Activated B cell treated with CpG ODN at 0.5 μM for 24 hours (primary cell): ENCODE measurements at regions of chr12 and their contacts with region 1.

Region 1: DNA sequence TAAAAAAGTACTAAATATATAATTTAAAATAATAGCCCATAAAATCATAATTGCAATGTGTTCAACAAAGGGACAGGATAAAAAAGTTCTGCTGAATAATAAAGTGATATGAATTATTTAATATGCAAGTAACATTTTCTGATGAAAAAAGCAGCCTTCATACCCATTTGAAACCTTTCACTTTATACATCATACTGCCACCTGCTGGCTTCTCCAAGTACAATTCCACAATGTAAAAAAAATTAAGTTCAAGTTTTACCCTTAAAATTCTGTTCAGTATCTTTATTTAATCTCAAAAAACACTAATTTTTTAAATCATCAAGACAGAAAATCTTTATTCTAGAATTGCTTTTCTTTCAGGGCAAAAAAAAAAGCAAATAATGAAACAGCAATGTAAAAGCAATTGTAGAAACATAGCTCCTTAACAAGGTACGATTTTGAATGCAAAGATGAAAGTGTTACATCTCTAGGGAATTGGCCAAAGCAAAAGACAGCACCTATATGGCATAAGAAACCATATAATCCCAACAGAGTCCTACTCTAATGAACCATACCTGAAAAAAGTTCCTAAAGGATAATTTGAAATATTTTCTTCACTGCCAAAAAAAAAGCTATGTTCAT is 15.0 kb downstream of the MDM1 start:
- DNase-seq: no peak
- ATAC-seq: no peak
- H3K4me3 Mint-ChIP-seq: no peak overlapping the region
- H3K27ac Mint-ChIP-seq: no peak overlapping the region
- H3K4me1 Mint-ChIP-seq: no peaks in the 10 kb centered on the region
- H3K27me3 Mint-ChIP-seq: no peaks in the 10 kb centered on the region
- CTCF ChIP-seq: peak; percentile 83

Region 2: DNA sequence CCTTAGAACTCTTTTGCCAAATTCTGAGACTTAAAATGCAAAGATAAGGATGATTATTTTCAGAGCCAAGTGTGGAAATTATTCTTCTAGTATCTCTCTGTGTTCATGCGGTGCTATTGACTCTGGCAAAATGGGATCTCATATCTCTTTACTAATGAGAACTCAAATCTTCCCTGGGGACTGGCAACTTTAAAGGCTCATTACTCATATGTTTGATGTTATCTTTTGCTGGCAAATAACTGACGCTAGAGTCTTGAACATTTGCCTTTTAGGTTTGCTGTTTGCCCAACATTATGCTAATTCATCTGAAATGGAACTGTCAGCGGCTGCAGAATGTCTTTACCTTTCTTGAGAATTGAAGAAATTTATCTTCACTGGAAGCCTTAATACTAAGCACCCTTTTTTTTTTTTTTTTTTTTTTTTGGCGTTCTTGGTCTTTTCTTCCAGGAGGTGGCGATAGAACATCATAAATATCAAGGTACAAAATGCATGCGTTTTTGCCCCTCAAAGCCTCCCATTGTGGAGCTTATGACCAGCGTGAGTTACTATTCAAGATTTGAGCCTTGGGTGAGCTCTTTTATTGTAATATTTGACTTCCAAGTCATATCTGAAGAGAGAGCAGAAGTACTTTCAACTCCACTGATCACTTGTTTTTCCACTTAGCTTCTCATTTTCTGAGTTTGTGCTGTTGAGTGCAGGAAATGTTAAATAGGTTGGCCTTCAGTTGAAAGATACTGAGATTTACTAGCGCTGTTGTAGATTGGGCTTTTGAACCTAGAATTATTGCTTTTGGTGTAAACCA is 961.4 kb before region 1 on chr12:
- CTCF ChIA-PET with region 1: interaction called, 6 read pairs
- POLR2A ChIA-PET with region 1: no interaction called
- intact Hi-C with region 1: loop called (anchors 1 kb)
- DNase-seq: no peak
- ATAC-seq: peak; percentile 54
- H3K4me3 Mint-ChIP-seq: no peak overlapping the region
- H3K27ac Mint-ChIP-seq: no peak overlapping the region
- H3K4me1 Mint-ChIP-seq: peaks cover 5% of the 10 kb centered on the region
- H3K27me3 Mint-ChIP-seq: no peaks in the 10 kb centered on the region
- CTCF ChIP-seq: no peak

Region 3: DNA sequence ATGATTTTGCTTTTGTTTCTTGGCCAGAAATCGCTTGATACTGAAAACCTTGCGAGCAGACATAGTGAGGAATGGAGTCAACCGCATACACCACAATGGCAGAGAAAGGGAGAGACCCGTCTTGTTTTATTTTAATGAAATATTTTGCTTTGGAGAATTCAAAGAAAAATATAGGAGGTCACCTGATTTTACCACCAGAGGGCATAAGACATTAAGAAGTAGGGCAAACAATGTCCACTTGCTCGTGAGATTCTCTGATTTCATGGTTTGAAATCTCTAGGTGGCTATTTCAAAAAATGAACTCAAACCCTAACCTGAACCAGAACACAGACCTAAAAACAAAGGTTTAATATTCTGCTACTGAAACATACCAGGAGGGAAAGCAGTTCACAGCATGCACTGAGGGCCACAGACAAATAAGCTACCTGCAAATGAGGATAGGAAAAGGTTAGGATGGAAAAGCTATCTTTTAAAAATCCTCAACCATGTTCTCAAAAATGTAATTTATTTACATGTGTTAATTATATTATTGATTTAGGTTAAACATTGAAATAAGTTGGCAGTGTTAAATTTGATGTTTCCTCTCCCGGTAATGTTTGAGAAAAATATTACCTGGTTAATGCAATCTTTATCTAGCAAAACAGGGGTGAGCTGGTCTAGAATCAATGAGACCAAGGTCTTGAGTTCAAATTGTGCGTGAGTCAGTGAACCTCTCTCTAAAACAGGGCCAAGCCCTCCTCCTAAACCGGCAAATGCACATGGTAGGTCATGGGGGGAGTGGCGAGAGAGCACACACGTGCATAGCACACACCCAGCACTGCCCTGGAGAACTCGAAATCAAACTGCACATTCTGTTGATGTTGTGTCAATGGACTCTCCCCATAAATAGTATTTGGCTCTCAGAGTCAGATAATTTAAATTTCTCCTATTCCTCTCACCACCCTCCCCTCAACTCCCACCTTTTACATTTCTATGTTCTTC is 315.4 kb before region 1 on chr12:
- CTCF ChIA-PET with region 1: no interaction called
- POLR2A ChIA-PET with region 1: no interaction called
- intact Hi-C with region 1: loop called (anchors 2 kb)
- DNase-seq: no peak
- ATAC-seq: peak; percentile 37
- H3K4me3 Mint-ChIP-seq: no peak overlapping the region
- H3K27ac Mint-ChIP-seq: no peak overlapping the region
- H3K4me1 Mint-ChIP-seq: peaks cover 10% of the 10 kb centered on the region
- H3K27me3 Mint-ChIP-seq: no peaks in the 10 kb centered on the region
- CTCF ChIP-seq: no peak

Region 4: DNA sequence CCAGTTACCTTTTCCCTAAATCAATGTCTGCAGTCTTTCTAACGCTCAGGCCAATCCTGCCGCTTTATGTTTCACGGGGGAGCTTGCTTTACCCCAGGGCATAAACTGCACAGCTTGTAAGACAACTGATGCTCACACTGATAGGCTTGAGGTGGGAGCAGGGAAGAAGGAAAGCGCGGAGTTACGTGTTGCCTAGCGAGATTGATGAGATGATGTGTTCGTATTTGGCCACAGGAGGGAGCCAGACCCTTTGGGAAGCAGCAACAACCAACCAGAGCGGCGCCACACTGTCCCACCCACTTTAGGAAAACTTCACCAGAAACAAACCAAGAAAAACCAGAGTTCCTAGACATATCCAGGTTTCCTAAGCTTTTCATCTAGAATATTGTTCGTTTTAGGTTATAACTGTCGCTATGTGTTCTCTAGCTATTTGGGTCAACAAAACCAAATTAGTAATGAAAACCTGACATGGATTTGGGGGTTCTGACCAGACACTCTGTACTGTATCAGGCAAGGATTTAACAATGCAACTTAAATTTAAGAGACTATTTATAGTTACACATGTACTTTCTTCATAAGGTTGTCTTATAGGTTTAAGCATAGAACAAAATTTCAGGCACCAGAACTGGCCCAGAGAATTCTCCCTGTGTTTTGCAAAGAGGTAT is 93.9 kb before region 1 on chr12:
- CTCF ChIA-PET with region 1: interaction called, 96 read pairs
- POLR2A ChIA-PET with region 1: interaction called, 3 read pairs
- intact Hi-C with region 1: loop called (anchors 1 kb)
- DNase-seq: peak; percentile 29
- ATAC-seq: peak; percentile 99
- H3K4me3 Mint-ChIP-seq: peak overlapping the region; percentile 48
- H3K27ac Mint-ChIP-seq: no peak overlapping the region
- H3K4me1 Mint-ChIP-seq: peaks cover 5% of the 10 kb centered on the region
- H3K27me3 Mint-ChIP-seq: peaks cover 3% of the 10 kb centered on the region
- CTCF ChIP-seq: no peak

Region 5: DNA sequence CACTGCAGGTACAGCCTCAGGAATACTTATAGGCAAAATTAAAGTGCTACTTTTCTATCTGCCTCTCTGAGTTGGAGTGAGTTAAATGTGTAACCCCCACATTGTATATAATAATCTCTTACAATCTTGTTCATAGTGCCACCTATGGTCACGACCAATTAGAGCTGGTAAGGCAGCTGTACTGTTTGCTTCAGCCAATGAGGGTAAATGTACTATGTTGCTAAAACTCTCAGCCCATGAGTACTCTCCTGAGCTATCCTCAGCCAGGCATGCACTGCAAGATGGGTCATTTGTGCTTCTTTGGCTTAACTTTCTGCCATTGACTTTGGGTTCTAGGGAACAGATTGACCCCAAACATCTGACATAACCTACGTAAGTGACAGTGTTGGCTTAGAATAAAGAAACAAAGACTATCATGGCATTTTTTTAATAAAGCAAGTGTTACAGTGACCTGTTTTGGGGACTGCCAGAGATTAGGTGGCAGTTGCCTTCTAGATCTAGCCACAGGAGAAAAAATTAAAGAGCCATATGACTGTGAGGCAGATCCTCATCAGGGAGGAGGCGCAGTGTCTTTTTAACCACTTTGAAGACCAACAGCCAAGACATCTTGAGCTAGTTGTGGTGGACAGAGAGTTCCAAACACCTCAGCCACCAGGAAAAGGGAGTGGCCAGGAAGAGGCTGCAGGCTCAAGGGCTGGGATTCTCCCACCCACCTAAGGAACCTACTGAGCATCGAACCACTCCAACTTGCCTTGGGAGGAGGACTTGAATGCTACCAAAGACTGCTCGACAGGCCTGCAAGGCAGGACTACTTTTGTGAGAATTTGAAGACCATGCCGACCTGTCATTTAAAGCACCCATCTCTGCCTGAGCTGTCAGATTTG is 476.0 kb after region 1 on chr12:
- CTCF ChIA-PET with region 1: no interaction called
- POLR2A ChIA-PET with region 1: no interaction called
- intact Hi-C with region 1: no loop called
- DNase-seq: no peak
- ATAC-seq: peak; percentile 89
- H3K4me3 Mint-ChIP-seq: no peak overlapping the region
- H3K27ac Mint-ChIP-seq: no peak overlapping the region
- H3K4me1 Mint-ChIP-seq: peaks cover 6% of the 10 kb centered on the region
- H3K27me3 Mint-ChIP-seq: no peaks in the 10 kb centered on the region
- CTCF ChIP-seq: no peak